ENCODE measurements at regions of chr11 and their contacts with region 1.

Region 1: DNA sequence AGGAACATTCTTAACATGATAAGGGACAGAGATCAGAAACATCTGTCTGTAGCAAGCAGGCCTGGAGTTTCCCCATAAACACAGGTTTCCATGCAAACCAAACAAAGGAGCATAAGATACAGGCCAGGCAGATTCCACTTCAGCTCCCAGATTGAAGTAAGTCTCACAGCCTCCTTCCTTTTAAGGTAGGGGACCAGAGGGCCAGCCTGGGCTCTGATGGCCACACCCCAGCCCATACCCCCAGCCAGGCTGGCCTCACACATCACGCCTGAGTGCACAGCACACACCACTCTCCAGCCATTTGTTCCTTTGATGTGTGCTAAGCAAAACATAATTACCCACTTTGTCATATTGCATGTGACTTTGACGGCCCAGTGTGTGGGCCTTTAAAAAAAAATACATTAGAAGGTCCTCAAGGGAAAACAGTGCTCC is 518.7 kb downstream of the NTM start:
- DNase-seq: no peak
- ATAC-seq: peak; percentile 59
- H3K4me3 Mint-ChIP-seq: no peak overlapping the region
- H3K27ac Mint-ChIP-seq: no peak overlapping the region
- H3K4me1 Mint-ChIP-seq: 0 out of 2 replicates have a peak, but pooled peaks cover 8% of the 10 kb centered on the region
- H3K27me3 Mint-ChIP-seq: no peaks in the 10 kb centered on the region; the same call in 1 of the 2 replicates
- CTCF ChIP-seq: no peak

Region 2: DNA sequence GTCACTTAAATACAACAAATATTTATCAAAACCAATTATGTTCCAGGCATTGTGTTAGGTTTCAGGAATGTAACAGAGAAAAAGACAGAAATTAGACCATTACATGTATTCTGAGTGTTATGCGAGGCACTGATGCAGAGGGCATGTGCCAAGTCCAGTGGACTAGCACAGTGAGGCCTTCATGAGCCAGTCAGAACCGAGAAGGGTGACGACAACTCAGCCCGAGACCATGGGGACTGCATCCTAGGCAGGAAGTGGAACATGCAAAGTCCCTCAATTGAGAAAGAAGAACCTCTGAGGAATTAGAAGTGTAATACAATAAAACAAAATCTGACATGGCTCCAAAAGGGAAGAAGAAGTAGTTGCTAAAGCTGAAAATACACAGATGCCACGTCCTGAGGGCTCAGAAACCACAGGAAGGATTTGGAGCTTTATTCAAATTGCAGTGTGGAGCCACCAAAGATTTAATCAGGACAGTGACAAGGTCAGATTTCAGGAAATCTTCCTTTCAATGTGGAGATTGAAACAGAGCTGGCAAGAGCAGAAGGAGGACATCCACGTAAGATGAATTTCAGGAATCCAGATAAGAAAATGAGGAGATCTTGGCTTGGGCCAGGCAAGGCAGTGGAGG is 10.9 kb after region 1 on chr11:
- CTCF ChIA-PET with region 1: interaction called, 19 read pairs
- POLR2A ChIA-PET with region 1: no interaction called
- DNase-seq: no peak
- ATAC-seq: no peak
- H3K4me3 Mint-ChIP-seq: no peak overlapping the region
- H3K27ac Mint-ChIP-seq: no peak overlapping the region
- H3K4me1 Mint-ChIP-seq: peaks cover 41% of the 10 kb centered on the region
- H3K27me3 Mint-ChIP-seq: no peaks in the 10 kb centered on the region
- CTCF ChIP-seq: no peak

Region 3: DNA sequence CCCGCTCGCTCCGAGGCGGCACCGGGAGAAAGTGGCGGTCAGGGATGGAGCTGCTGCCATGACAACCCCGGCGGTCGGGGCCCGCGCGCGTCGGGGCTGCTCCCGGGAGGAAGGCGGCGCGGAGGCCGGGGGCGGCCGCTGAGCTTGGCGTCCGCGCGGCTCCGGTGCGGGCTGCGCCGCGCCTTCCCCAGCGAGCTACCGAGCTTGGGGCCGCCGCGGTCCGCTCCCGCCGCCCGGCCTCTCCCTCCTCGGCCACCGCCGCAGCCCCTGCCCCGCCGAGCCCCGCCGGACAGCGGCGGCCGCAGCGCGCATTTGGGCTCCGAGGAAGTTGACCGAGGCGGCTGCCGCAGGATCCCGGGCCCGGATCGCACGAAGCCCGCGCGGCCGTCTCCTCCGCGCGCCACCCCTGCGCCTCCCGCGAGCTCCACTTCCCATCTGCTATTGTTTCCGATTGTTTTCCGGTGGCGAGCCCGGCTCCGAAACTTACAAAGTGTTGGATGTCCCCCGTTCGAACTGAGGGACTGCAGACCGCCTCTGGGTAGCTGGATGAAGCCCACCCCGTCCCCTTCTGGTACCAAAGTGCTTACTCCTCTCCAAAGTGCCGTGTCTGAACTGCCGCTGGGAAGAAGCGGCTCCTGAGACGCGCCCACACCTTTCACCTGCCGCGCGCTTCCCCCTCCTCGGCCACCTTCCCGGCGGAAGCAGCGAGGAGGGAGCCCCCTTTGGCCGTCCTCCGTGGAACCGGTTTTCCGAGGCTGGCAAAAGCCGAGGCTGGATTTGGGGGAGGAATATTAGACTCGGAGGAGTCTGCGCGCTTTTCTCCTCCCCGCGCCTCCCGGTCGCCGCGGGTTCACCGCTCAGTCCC is 21.6 kb after region 1 on chr11:
- CTCF ChIA-PET with region 1: interaction called, 19 read pairs
- POLR2A ChIA-PET with region 1: no interaction called
- DNase-seq: peak; percentile 50
- ATAC-seq: peak; percentile 32
- H3K4me3 Mint-ChIP-seq: peak overlapping the region; percentile 88
- H3K27ac Mint-ChIP-seq: no peak overlapping the region
- H3K4me1 Mint-ChIP-seq: peaks cover 52% of the 10 kb centered on the region
- H3K27me3 Mint-ChIP-seq: peaks cover 8% of the 10 kb centered on the region; the same call in 1 of the 2 replicates
- CTCF ChIP-seq: no peak